Activated CD4-positive, alpha-beta memory T cell treated with anti-CD3 and anti-CD28 coated beads for 36 hours (primary cell): ENCODE measurements at regions of chr7 and their contacts with region 1.

Region 1: DNA sequence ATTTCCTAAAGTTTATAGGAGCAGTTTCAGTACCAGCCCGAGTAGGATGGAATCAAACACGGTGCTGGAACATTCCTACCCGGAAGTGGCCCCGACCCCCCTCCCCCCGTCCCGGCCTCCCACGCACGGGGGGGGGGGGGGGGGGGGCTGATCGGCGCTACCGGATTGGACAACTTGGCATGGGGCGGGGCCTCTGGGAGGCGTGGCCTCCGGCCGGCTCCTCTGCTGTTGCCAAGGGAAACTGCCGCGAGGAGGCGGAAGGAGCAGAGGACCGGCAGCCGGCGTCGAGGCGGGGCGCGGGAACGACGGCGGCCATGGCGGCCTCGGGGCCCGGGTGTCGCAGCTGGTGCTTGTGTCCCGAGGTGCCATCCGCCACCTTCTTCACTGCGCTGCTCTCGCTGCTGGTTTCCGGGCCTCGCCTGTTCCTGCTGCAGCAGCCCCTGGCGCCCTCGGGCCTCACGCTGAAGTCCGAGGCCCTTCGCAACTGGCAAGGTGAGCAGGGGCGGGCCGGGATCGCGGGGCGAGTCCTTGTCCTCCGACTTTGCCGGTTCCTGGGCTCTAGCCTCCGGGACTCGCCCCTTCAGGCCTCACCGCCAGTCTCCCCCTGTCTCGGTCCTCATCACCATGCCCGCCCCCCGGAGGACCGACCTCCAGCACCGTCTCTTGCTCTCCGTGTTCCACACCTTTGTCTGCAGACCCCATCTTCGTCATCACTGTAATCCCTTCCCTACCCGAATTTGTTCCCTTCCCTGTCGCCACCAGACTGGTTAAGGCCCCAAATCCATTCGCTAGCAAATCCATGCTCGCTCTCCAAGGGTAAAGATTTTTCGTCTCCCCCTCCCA is at the start of gene RHBDD2:
- DNase-seq: peak; percentile 98
- H3K4me3 Mint-ChIP-seq: peak within 1 kb of the TSS; percentile 96
- H3K27ac Mint-ChIP-seq: peak within 1 kb of the TSS; percentile 90
- H3K4me1 Mint-ChIP-seq: peaks cover 29% of the 10 kb centered on the region
- H3K27me3 Mint-ChIP-seq: no peaks in the 10 kb centered on the region
- total RNA-seq, gene RHBDD2: 30.1 to 31.9 TPM

Region 2: GRCh38 chr7:75866489-75867389 is 12.3 kb before region 1 on chr7:
- CTCF ChIA-PET with region 1: interaction called, 8 read pairs
- POLR2A ChIA-PET with region 1: interaction called, 3 read pairs
- intact Hi-C with region 1: loop called (anchors 1 kb)
- DNase-seq: peak; percentile 64
- H3K4me3 Mint-ChIP-seq: no peak overlapping the region
- H3K27ac Mint-ChIP-seq: no peak overlapping the region
- H3K4me1 Mint-ChIP-seq: peaks cover 22% of the 10 kb centered on the region
- H3K27me3 Mint-ChIP-seq: peaks cover 8% of the 10 kb centered on the region

Region 3: DNA sequence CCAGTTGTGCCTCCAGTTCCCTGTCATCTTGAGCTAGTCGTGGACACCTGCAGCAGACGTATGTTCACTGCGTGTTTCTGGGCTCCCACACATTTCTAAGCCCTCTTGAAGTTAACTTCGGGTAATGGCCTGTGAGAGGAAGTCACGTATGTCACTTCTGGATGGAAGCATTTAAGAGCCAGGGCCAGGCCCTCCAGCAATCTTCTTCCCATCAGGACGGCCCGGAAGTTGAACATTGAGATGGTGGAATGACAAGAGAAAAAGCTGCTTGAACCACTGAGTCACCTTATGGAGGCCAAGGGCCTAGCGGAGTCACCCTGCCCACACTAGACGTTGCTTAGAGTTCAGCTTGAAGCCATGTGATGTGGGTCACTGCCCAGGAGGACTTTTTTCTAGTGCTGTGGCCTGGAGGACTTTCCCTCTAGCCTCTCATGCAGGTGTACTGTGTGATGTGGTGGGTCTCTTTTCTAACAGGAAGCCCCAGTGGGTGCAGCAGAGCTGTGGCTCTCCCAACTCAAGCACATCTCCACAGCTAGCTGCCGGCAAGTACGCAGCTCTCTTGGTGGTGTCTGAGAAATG is 49.4 kb after region 1 on chr7:
- CTCF ChIA-PET with region 1: no interaction called
- POLR2A ChIA-PET with region 1: no interaction called
- intact Hi-C with region 1: no loop called
- DNase-seq: peak; percentile 19
- H3K4me3 Mint-ChIP-seq: no peak overlapping the region
- H3K27ac Mint-ChIP-seq: no peak overlapping the region
- H3K4me1 Mint-ChIP-seq: peaks cover 8% of the 10 kb centered on the region
- H3K27me3 Mint-ChIP-seq: no peaks in the 10 kb centered on the region